GM13976 (cell line): ENCODE measurements at regions of chr1 and their contacts with region 1.

Region 1: DNA sequence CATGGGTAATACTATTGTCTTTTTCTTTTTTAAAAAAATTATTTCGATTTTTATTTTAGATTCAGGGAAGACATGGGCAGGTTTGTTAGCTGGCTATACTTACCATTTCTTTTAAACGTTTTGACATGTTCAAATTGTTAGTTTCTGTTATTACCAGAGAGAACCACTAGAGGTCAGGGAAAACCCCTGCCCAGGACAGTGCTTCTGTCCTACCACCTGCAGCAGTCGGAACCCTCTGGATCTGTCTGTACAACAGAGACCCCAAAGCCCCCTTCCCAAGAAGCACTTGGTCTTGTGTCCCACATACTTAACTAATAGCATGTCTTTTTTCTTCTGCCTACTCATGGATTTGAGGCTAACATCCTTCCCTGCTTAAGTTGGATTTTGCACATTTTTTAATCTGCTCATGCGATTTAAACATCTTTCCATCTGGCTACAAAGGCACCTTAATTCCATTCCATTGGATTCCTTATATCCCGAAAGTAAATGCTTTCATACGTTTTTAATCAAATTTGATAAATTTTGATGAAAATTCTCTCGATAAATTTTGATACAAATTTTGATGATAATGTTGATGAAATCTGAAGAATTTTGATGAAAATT is 10.0 kb upstream of the C1orf115 start:
- DNase-seq: peak; percentile 63
- CTCF ChIP-seq: peak; percentile 49

Region 2: GRCh38 chr1:220733090-220733601 is 53.0 kb after region 1 on chr1:
- in situ Hi-C with region 1: loop called (anchors 10 kb)
- DNase-seq: peak; percentile 78
- CTCF ChIP-seq: peak; percentile 74